PC-3 (cell line): ENCODE measurements at regions of chr7 and their contacts with region 1.

Region 1: GRCh38 chr7:106285051-106285854 is 470 bp upstream of the NAMPT start:
- DNase-seq: peak; percentile 100
- ATAC-seq: peak; percentile 83
- H3K4me3 ChIP-seq: peak overlapping the region; percentile 79
- H3K27ac ChIP-seq: peak overlapping the region; percentile 70
- H3K4me1 ChIP-seq: peaks cover 26% of the 10 kb centered on the region
- H3K27me3 ChIP-seq: no peaks in the 10 kb centered on the region
- CTCF ChIP-seq: no peak

Region 2: DNA sequence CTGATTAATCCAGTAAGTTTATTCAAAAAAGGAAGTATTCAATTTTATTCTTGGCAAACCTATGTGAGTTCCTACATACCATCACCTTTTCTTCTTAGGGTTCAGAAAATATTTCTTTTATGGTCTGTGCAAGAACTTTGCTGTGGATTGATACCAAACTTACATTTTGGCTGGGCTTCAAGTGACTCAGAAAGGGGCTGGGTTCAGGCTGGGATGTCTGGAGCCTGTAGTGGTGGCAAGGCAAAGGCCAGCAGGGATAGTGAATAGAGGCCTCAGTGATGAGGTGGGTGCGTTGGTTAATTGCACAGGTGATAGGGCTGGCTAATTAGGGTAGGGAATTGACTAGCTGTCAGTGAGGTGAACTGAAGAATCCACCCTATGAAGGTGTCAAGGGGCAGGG is 368.6 kb before region 1 on chr7:
- CTCF ChIA-PET with region 1: no interaction called
- POLR2A ChIA-PET with region 1: no interaction called
- intact Hi-C with region 1: no loop called
- DNase-seq: peak; percentile 33
- ATAC-seq: peak; percentile 74
- H3K4me3 ChIP-seq: no peak overlapping the region
- H3K27ac ChIP-seq: no peak overlapping the region
- H3K4me1 ChIP-seq: no peaks in the 10 kb centered on the region
- H3K27me3 ChIP-seq: no peaks in the 10 kb centered on the region
- CTCF ChIP-seq: no peak

Region 3: DNA sequence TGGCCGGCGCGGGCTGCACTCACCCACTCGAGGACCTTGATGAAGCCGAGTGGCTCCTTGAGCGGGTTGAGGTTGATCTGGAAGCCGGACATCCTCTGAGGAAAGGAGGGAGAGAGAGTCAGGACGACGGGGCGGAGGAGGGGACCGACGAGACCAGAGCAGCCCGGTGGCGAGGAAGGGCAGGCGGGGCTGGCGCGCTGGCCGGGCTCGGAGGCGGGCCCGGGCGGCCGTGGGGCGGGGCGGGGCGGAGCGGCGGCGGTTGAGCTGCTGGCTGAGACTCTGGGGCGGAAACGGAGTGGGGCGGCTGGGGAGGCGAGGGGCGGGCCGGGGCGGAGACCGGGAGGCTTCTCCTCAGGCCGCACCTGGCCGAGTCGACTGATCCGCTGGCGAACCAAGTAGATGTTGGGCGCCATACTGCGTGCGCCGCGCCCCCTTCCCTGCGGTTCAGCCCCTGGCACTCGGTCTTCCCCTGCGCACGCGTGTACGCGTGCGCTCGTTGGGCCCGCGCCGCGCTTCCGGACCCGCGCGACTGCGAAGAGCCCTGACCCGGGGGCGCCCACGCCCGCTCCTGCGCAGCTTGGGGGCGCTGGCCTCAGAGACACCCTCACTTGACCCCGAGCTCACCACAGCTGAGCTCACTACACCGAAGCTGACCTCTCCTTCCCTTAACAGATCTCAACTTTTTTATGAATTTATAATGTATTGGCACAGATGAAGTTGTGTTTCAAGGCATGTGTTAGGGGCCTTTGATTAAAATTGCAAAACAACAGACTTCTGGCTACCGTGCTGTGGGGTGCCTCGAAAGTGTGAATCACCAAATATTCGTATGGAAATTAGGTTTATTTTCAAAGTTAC is 172.9 kb before region 1 on chr7 and contains the start of gene SYPL1:
- CTCF ChIA-PET with region 1: no interaction called
- POLR2A ChIA-PET with region 1: no interaction called
- intact Hi-C with region 1: loop called (anchors 2 kb)
- DNase-seq: peak; percentile 94
- ATAC-seq: peak; percentile 82
- H3K4me3 ChIP-seq: peak within 1 kb of the TSS; percentile 90
- H3K27ac ChIP-seq: peak within 1 kb of the TSS; percentile 71
- H3K4me1 ChIP-seq: peaks cover 30% of the 10 kb centered on the region
- H3K27me3 ChIP-seq: no peaks in the 10 kb centered on the region
- CTCF ChIP-seq: 0 out of 2 replicates have a peak, but pooled peaks have one; percentile 20
- total RNA-seq, gene SYPL1: 45.9 and 57.9 TPM in 2 replicates

Region 4: GRCh38 chr7:106269254-106269961 is 15.8 kb before region 1 on chr7:
- CTCF ChIA-PET with region 1: no interaction called
- POLR2A ChIA-PET with region 1: interaction called, 10 read pairs
- intact Hi-C with region 1: no loop called
- DNase-seq: no peak
- ATAC-seq: no peak
- H3K4me3 ChIP-seq: no peak overlapping the region
- H3K27ac ChIP-seq: no peak overlapping the region
- H3K4me1 ChIP-seq: no peaks in the 10 kb centered on the region
- H3K27me3 ChIP-seq: no peaks in the 10 kb centered on the region
- CTCF ChIP-seq: no peak

Region 5: GRCh38 chr7:106346678-106347217 is 61.5 kb after region 1 on chr7:
- CTCF ChIA-PET with region 1: no interaction called
- POLR2A ChIA-PET with region 1: interaction called, 5 read pairs
- intact Hi-C with region 1: loop called (anchors 1 kb)
- DNase-seq: peak; percentile 98
- ATAC-seq: peak; percentile 91
- H3K4me3 ChIP-seq: no peak overlapping the region
- H3K27ac ChIP-seq: peak overlapping the region; percentile 52
- H3K4me1 ChIP-seq: peaks cover 28% of the 10 kb centered on the region
- H3K27me3 ChIP-seq: no peaks in the 10 kb centered on the region
- CTCF ChIP-seq: no peak

Region 6: GRCh38 chr7:106367018-106367420 is 81.8 kb after region 1 on chr7:
- CTCF ChIA-PET with region 1: no interaction called
- POLR2A ChIA-PET with region 1: no interaction called
- intact Hi-C with region 1: no loop called
- DNase-seq: peak; percentile 57
- ATAC-seq: peak; percentile 65
- H3K4me3 ChIP-seq: no peak overlapping the region
- H3K27ac ChIP-seq: no peak overlapping the region
- H3K4me1 ChIP-seq: peaks cover 9% of the 10 kb centered on the region
- H3K27me3 ChIP-seq: no peaks in the 10 kb centered on the region
- CTCF ChIP-seq: peak; percentile 66

Region 7: GRCh38 chr7:106461993-106462859 is 177.0 kb after region 1 on chr7:
- CTCF ChIA-PET with region 1: interaction called, 16 read pairs
- POLR2A ChIA-PET with region 1: interaction called, 7 read pairs
- intact Hi-C with region 1: loop called (anchors 1 kb)
- DNase-seq: peak; percentile 81
- ATAC-seq: peak; percentile 59
- H3K4me3 ChIP-seq: no peak overlapping the region
- H3K27ac ChIP-seq: no peak overlapping the region
- H3K4me1 ChIP-seq: peaks cover 28% of the 10 kb centered on the region
- H3K27me3 ChIP-seq: no peaks in the 10 kb centered on the region
- CTCF ChIP-seq: peak; percentile 82

Region 8: GRCh38 chr7:106904873-106905272 is 619.6 kb after region 1 on chr7:
- CTCF ChIA-PET with region 1: no interaction called
- POLR2A ChIA-PET with region 1: interaction called, 11 read pairs
- intact Hi-C with region 1: no loop called
- DNase-seq: no peak
- ATAC-seq: no peak
- H3K4me3 ChIP-seq: no peak overlapping the region
- H3K27ac ChIP-seq: no peak overlapping the region
- H3K4me1 ChIP-seq: no peaks in the 10 kb centered on the region
- H3K27me3 ChIP-seq: peaks cover 12% of the 10 kb centered on the region; the same call in 1 of the 2 replicates
- CTCF ChIP-seq: no peak